ENCODE measurements at regions of chr19 and their contacts with region 1.

Region 1: DNA sequence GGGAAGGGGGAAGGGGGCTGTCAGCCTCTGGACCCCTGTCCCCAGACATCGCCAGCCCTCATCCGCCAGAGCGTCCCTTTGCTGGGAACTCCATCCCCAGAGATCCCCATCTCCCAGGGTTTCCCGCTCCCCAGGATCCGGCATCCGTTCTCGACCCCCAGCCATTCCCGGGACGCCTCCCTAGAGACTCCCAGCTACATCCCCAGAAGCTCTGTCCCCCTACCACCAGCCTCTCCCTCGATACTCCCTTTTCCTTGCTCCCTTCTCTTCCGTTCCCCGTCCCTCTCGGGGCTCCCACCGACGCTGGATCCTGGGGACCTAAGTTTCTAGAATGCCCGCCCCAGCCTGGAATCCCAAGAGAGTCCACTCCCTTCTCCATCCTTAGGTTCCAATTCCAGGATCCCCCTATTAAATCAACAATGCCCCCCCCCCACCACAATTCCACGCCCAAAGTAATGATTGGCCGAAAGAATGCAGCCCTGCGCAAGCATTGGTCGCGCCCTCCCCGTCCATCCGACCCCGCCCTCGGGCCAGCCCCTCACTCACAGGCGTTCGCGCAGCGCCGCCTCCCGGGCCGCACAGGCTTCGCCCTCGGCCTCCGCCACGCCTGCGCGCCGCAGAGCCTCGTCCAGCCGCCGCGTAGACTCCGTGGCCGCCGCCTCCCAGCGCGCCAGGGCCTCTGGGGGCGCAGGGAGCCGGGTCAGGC is 3.2 kb downstream of the CCDC194 start:
- DNase-seq: peak; percentile 75 to 94 (median 90)
- ATAC-seq: peak; percentile 99
- H3K4me3 ChIP-seq: peak overlapping the region; percentile 63 to 66
- H3K4me3 Mint-ChIP-seq: peak overlapping the region; percentile 87
- H3K27ac ChIP-seq: no peak overlapping the region
- H3K27ac Mint-ChIP-seq: no peak overlapping the region
- H3K4me1 ChIP-seq: peaks cover 22% of the 10 kb centered on the region
- H3K4me1 Mint-ChIP-seq: peaks cover 18% of the 10 kb centered on the region
- H3K27me3 ChIP-seq: no peaks in the 10 kb centered on the region
- H3K27me3 Mint-ChIP-seq: no peaks in the 10 kb centered on the region
- CTCF ChIP-seq: peak; percentile 62

Region 2: GRCh38 chr19:16771618-16772017 is 619.2 kb before region 1 on chr19:
- CTCF ChIA-PET with region 1: no interaction called
- POLR2A ChIA-PET with region 1: no interaction called
- intact Hi-C with region 1: loop called in 1 of 2 experiments (anchors 5 kb)
- DNase-seq: peak; percentile 52 to 85 (median 76)
- ATAC-seq: peak; percentile 69
- H3K4me3 ChIP-seq: no peak overlapping the region
- H3K4me3 Mint-ChIP-seq: no peak overlapping the region
- H3K27ac ChIP-seq: no peak overlapping the region
- H3K27ac Mint-ChIP-seq: no peak overlapping the region
- H3K4me1 ChIP-seq: no peaks in the 10 kb centered on the region
- H3K4me1 Mint-ChIP-seq: no peaks in the 10 kb centered on the region
- H3K27me3 ChIP-seq: peaks cover 0 to 20% of the 10 kb centered on the region in 2 experiments
- H3K27me3 Mint-ChIP-seq: peaks cover 43% of the 10 kb centered on the region
- CTCF ChIP-seq: peak; percentile 74

Region 3: DNA sequence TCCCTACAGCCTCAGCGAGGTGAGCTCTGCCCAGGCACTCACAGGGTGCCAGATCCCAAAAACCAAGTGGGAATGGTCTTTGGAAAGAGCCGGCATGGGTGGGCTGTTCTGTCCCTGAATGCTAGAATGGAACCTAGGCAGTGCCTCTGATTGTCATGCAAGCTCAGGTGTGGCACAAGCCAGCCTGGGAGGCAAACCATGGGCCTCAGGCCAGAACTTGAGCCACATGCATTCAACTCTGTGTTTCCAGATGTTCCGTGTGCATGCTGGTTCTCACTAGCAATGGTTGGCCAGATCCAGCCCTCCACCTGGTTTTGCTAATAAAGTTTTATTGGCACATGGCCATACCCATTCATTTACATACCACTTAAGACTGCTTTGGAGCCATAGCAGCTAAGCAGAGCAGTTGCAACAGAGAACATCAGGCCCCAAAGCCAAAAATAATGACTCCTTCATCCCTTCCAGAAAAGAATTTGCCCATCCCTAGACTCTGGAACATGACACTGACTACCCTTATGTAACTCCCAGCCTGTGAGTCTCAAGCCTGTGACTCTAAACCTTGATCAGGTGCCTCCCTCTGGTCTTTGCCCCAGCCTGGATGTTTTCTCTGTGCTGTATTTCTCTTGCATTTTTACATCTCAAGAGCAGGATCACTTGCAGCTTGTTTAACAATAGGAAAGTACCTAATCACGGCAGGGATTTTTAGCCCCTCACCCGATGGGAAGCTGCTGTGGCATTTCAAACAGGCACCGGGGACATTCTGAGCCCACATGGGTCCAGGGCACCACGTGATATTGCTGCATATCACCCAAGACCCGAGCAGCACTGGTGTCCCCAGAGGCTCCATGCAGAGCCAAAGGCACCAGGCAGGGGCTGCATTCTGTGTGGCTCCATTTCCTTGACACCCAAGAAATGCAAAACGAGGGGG is 231.1 kb before region 1 on chr19:
- CTCF ChIA-PET with region 1: no interaction called
- POLR2A ChIA-PET with region 1: no interaction called
- intact Hi-C with region 1: no loop called
- DNase-seq: no peak
- ATAC-seq: no peak
- H3K4me3 ChIP-seq: no peak overlapping the region
- H3K4me3 Mint-ChIP-seq: no peak overlapping the region
- H3K27ac ChIP-seq: peak overlapping the region in 1 of 2 experiments; percentile 0
- H3K27ac Mint-ChIP-seq: peak overlapping the region; percentile 16
- H3K4me1 ChIP-seq: no peaks in the 10 kb centered on the region
- H3K4me1 Mint-ChIP-seq: no peaks in the 10 kb centered on the region
- H3K27me3 ChIP-seq: no peaks in the 10 kb centered on the region
- H3K27me3 Mint-ChIP-seq: no peaks in the 10 kb centered on the region
- CTCF ChIP-seq: no peak

Region 4: GRCh38 chr19:17260842-17261325 is 129.9 kb before region 1 on chr19:
- CTCF ChIA-PET with region 1: interaction called, 8 read pairs
- POLR2A ChIA-PET with region 1: no interaction called
- intact Hi-C with region 1: loop called (anchors 1 to 10 kb)
- DNase-seq: peak; percentile 81 to 95 (median 90)
- ATAC-seq: peak; percentile 100
- H3K4me3 ChIP-seq: no peak overlapping the region
- H3K4me3 Mint-ChIP-seq: no peak overlapping the region
- H3K27ac ChIP-seq: no peak overlapping the region
- H3K27ac Mint-ChIP-seq: no peak overlapping the region
- H3K4me1 ChIP-seq: peaks cover 12% of the 10 kb centered on the region
- H3K4me1 Mint-ChIP-seq: peaks cover 9% of the 10 kb centered on the region
- H3K27me3 ChIP-seq: no peaks in the 10 kb centered on the region
- H3K27me3 Mint-ChIP-seq: no peaks in the 10 kb centered on the region
- CTCF ChIP-seq: peak; percentile 69

Region 5: DNA sequence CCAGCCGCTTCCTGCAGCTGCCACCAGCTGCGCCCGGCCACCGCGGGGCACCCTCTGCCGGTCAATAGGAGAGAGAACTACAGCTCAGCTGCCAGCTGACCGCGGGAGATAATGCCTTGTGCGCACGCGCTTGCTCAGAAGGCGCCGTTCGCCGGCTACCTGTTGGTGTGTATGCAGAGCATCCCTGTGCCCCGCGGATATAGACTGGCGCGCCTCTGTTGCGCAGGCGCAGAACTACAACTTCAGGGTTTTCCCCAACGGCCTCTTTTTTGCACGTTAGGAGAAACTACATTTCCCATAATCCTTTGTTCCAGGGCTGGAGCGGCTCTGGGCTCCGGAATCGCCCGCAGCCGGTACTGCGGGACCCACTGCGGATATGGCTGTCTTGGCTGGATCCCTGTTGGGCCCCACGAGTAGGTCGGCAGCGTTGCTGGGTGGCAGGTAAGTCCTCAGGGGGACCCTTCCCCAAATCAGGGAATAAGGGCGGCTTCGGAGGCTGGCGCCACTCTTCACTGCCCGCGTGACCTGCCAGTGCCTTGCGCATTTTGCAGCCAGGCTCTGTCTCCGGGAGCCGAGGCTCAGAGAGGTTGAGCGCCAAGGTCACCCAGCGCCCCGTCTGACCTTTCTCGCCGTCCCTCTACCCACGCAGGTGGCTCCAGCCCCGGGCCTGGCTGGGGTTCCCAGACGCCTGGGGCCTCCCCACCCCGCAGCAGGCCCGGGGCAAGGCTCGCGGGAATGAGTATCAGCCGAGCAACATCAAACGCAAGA is 85.1 kb before region 1 on chr19 and contains the start of gene MRPL34:
- CTCF ChIA-PET with region 1: interaction called, 3 read pairs
- POLR2A ChIA-PET with region 1: no interaction called
- intact Hi-C with region 1: loop called in 1 of 2 experiments (anchors 5 kb)
- DNase-seq: peak; percentile 85 to 99 (median 93)
- ATAC-seq: peak; percentile 53
- H3K4me3 ChIP-seq: peak within 1 kb of the TSS; percentile 77 to 79
- H3K4me3 Mint-ChIP-seq: peak within 1 kb of the TSS; percentile 89
- H3K27ac ChIP-seq: peak within 1 kb of the TSS; percentile 55 to 74
- H3K27ac Mint-ChIP-seq: peak within 1 kb of the TSS; percentile 91
- H3K4me1 ChIP-seq: peaks cover 44% of the 10 kb centered on the region
- H3K4me1 Mint-ChIP-seq: peaks cover 48% of the 10 kb centered on the region
- H3K27me3 ChIP-seq: no peaks in the 10 kb centered on the region
- H3K27me3 Mint-ChIP-seq: no peaks in the 10 kb centered on the region
- CTCF ChIP-seq: peak; percentile 57
- total RNA-seq, gene MRPL34: 29.5 to 33.8 TPM

Region 6: GRCh38 chr19:17405250-17406038 is 14.6 kb after region 1 on chr19 and contains the start of gene BST2:
- CTCF ChIA-PET with region 1: interaction called, 12 read pairs
- POLR2A ChIA-PET with region 1: interaction called, 10 read pairs
- intact Hi-C with region 1: loop called in 1 of 2 experiments (anchors 2 kb)
- DNase-seq: peak in 7 of 9 experiments; percentile 45 to 90 (median 61)
- ATAC-seq: peak; percentile 82
- H3K4me3 ChIP-seq: peak within 1 kb of the TSS; percentile 84 to 86
- H3K4me3 Mint-ChIP-seq: peak within 1 kb of the TSS; percentile 95
- H3K27ac ChIP-seq: peak within 1 kb of the TSS; percentile 65 to 84
- H3K27ac Mint-ChIP-seq: peak within 1 kb of the TSS; percentile 92
- H3K4me1 ChIP-seq: peaks cover 28% of the 10 kb centered on the region
- H3K4me1 Mint-ChIP-seq: peaks cover 44% of the 10 kb centered on the region
- H3K27me3 ChIP-seq: no peaks in the 10 kb centered on the region
- H3K27me3 Mint-ChIP-seq: no peaks in the 10 kb centered on the region
- CTCF ChIP-seq: no peak
- total RNA-seq, gene BST2: 25.1 to 29.7 TPM

Region 7: DNA sequence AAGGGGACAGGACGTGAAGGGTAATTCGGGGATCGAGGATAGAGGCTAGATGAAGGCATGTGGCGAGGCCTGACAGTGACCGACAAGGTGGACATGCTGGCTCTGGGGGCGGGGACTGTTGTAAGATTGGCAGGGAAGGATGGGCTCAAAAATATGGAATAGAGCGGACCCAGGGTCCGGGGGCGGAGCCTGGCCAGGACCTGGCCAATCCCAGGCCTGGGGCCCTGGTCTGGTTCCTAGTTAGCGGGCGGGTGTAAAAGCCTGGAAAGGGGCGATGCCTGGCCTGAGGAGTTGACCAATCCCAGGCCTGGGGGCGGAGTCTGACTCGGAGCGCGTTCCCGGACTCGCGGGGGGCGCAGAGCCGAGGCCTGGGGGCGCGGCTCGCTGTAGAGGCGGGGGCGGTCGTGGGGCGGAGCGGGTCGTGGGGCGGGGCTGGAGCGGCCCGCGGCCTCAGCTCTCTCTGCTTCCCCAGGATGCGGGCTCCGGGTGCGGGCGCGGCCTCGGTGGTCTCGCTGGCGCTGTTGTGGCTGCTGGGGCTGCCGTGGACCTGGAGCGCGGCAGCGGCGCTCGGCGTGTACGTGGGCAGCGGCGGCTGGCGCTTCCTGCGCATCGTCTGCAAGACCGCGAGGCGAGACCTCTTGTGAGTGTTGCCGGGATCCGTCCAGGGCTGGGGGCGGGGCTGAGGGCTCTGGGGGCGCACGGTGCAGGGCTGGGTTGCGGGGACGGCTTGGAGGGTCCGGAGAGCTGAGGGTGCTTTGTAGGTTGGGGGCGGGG is 79.4 kb after region 1 on chr19 and contains the start of gene SLC27A1:
- CTCF ChIA-PET with region 1: interaction called, 37 read pairs
- POLR2A ChIA-PET with region 1: no interaction called
- intact Hi-C with region 1: loop called (anchors 1 to 5 kb)
- DNase-seq: peak; percentile 77 to 96 (median 91)
- ATAC-seq: peak; percentile 74
- H3K4me3 ChIP-seq: peak within 1 kb of the TSS; percentile 62 to 86
- H3K4me3 Mint-ChIP-seq: peak within 1 kb of the TSS; percentile 93
- H3K27ac ChIP-seq: peak within 1 kb of the TSS; percentile 45 to 80
- H3K27ac Mint-ChIP-seq: peak within 1 kb of the TSS; percentile 89
- H3K4me1 ChIP-seq: peaks cover 22% of the 10 kb centered on the region
- H3K4me1 Mint-ChIP-seq: peaks cover 33% of the 10 kb centered on the region
- H3K27me3 ChIP-seq: no peaks in the 10 kb centered on the region
- H3K27me3 Mint-ChIP-seq: no peaks in the 10 kb centered on the region
- CTCF ChIP-seq: no peak
- total RNA-seq, gene SLC27A1: 8.1 to 9.4 TPM

Region 8: DNA sequence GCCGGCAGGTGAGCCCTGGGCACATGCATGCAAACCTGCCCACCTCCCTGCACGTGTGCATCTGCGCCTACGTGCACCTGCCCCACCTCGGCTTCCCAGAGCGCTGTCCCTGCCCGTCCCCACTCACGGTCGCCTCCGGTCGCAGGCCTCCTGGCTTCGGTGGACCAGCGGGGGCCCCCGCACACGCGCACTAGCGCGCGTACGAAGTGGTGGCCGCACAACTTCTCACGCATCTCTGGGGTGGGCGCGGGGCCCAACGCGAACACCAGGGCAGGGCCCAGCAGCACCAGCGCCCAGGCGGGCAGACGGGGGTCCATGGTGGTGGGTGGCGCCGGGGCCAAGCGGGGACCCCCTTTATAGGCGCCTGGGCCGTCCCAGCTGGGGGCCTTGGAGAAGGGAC is 430.4 kb after region 1 on chr19 and contains the start of gene INSL3:
- CTCF ChIA-PET with region 1: no interaction called
- POLR2A ChIA-PET with region 1: no interaction called
- intact Hi-C with region 1: no loop called
- DNase-seq: no peak
- ATAC-seq: no peak
- H3K4me3 ChIP-seq: no peak within 1 kb of the TSS
- H3K4me3 Mint-ChIP-seq: no peak within 1 kb of the TSS
- H3K27ac ChIP-seq: no peak within 1 kb of the TSS
- H3K27ac Mint-ChIP-seq: no peak within 1 kb of the TSS
- H3K4me1 ChIP-seq: no peaks in the 10 kb centered on the region
- H3K4me1 Mint-ChIP-seq: no peaks in the 10 kb centered on the region
- H3K27me3 ChIP-seq: no peaks in the 10 kb centered on the region
- H3K27me3 Mint-ChIP-seq: no peaks in the 10 kb centered on the region
- CTCF ChIP-seq: no peak
- total RNA-seq, gene INSL3: 6.1 to 7.6 TPM

Measured in CD8-positive, alpha-beta T cell (primary cell).